Mammary epithelial cell (primary cell): ENCODE measurements at regions of chr16 and their contacts with region 1.

Region 1: DNA sequence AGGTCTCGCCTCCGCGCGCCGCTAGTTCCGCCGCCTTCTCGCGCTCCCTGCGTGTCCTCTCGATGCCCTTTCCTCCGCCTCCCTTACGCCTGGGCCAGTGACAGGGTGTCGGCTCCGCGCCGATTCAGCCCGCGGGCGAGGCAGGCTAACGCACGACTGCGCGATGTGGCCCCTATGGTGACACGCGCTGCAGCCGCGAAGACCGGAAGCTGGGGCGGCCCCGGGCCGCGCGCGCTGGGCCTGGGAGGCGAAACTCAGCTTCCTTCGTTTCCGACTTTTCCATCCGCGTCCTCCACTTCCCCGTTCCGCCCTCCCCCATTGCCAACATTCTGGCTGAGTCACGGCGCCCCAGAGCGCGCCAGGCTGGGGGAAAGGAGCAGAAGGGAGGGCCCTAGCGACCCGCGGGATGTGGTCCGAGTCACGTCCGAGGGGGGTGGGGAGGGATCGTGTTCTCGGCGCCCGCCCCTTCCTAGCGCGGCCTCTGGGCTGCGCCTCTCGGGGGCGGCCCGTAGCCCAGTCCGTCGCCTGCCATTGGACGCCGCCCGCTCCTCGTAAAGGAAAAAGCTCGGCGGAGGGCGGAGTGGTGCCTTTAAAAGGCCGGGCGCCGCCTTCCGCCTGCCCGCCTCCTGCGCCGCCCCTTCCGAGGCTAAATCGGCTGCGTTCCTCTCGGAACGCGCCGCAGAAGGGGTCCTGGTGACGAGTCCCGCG is at the start of gene ALDOA:
- DNase-seq: peak; percentile 100
- H3K4me3 ChIP-seq: peak within 1 kb of the TSS; percentile 97 to 100 (median 100)
- H3K27ac ChIP-seq: peak within 1 kb of the TSS; percentile 81
- H3K4me1 ChIP-seq: peaks cover 41% of the 10 kb centered on the region
- H3K27me3 ChIP-seq: no peaks in the 10 kb centered on the region
- CTCF ChIP-seq: no peak
- total RNA-seq, gene ALDOA: 758 to 2,329 TPM

Region 2: DNA sequence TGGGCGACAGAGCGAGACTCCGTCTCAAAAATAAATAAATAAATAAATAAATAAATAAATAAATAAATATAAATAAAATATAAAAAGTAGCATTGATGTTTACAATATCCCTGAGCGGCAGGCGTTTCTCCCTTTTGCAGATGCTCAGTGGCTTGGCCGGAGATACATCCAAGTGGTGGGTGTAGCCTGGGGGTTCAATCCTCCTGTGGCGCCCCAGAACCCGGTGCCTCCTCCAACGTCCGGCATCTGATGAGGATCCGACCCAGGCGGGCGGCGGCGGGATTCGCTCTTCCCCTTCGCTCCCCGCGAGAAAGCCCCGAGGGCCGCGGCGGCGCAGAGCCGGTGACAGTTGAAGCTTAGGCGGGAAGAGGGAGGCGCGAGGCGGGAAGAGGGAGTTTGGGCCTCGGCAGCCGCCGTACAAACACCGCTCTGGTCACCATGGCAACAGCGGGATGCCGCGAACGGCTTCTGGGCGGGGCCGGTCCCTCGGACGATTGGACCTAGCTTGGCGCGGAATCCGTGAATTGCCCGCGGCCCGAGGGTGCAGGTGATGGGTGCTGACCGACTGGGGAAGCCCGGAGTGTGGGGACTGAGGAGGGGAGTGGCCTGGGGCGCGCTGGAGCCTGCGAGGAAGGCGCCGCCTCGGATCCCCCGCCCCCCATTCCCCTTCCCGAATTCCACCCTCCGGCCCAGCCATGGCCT is 12.5 kb before region 1 on chr16:
- CTCF ChIA-PET with region 1: interaction called, 8 read pairs
- dilution Hi-C with region 1: no loop called
- in situ Hi-C with region 1: no loop called
- intact Hi-C with region 1: loop called (anchors 1 kb)
- DNase-seq: peak; percentile 90
- H3K4me3 ChIP-seq: peak overlapping the region; percentile 77 to 90 (median 89)
- H3K27ac ChIP-seq: peak overlapping the region; percentile 78
- H3K4me1 ChIP-seq: peaks cover 22% of the 10 kb centered on the region
- H3K27me3 ChIP-seq: no peaks in the 10 kb centered on the region
- CTCF ChIP-seq: no peak

Region 3: GRCh38 chr16:30075507-30076275 is 10.4 kb after region 1 on chr16 and contains the start of gene PPP4C:
- CTCF ChIA-PET with region 1: no interaction called
- dilution Hi-C with region 1: no loop called
- in situ Hi-C with region 1: no loop called
- intact Hi-C with region 1: loop called (anchors 1 kb)
- DNase-seq: peak; percentile 85
- H3K4me3 ChIP-seq: peak within 1 kb of the TSS; percentile 78 to 99 (median 89)
- H3K27ac ChIP-seq: peak within 1 kb of the TSS; percentile 80
- H3K4me1 ChIP-seq: peaks cover 14% of the 10 kb centered on the region
- H3K27me3 ChIP-seq: no peaks in the 10 kb centered on the region
- CTCF ChIP-seq: no peak
- total RNA-seq, gene PPP4C: 125 to 221 TPM

Region 4: GRCh38 chr16:30124985-30125379 is 59.7 kb after region 1 on chr16:
- CTCF ChIA-PET with region 1: no interaction called
- dilution Hi-C with region 1: no loop called
- in situ Hi-C with region 1: no loop called
- intact Hi-C with region 1: loop called (anchors 2 kb)
- DNase-seq: no peak
- H3K4me3 ChIP-seq: no peak overlapping the region
- H3K27ac ChIP-seq: no peak overlapping the region
- H3K4me1 ChIP-seq: peaks cover 8% of the 10 kb centered on the region
- H3K27me3 ChIP-seq: no peaks in the 10 kb centered on the region
- CTCF ChIP-seq: no peak

Region 5: DNA sequence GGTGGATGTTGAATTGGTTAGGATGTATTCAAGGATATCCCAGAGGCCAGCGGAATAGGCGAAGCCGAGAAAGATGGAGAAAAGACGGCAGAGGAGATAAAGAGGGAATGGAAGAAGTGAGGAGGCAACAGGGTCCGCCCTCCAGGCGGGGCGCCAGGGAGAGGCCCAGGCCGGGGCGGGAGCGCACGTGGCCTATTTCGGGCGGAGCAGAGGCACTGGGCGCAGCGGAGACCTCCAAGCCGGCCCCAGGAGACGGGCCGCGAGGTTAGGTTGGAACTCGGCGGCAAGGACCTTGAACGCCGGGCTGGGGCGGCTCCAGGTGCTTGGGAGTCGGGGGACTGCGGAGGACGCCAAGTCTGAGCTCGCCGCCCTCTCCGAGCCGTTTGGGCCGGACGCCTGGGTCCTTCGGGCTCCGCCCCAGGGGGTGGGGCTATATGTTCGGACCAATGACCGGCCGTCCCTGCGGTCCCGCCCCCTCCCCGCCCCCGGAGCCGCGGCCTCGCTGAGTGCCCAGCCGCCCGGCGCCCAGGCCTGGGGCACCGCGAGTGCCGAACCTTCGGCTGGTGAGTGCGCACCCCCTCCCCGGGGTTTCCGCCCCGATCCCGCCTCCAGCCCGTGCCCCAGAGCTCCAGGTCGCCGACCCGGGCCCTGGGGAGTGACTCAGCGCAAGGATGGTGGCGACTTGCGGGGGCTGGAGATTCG is 342.0 kb after region 1 on chr16 and contains the start of gene ZNF771:
- CTCF ChIA-PET with region 1: no interaction called
- dilution Hi-C with region 1: no loop called
- in situ Hi-C with region 1: no loop called
- intact Hi-C with region 1: loop called (anchors 2 kb)
- DNase-seq: peak; percentile 83
- H3K4me3 ChIP-seq: peak within 1 kb of the TSS; percentile 48 to 82 (median 82)
- H3K27ac ChIP-seq: peak within 1 kb of the TSS; percentile 64
- H3K4me1 ChIP-seq: peaks cover 12% of the 10 kb centered on the region
- H3K27me3 ChIP-seq: no peaks in the 10 kb centered on the region
- CTCF ChIP-seq: peak in 1 of 2 donors; percentile 10
- total RNA-seq, gene ZNF771: 6.3 to 6.5 TPM

Region 6: DNA sequence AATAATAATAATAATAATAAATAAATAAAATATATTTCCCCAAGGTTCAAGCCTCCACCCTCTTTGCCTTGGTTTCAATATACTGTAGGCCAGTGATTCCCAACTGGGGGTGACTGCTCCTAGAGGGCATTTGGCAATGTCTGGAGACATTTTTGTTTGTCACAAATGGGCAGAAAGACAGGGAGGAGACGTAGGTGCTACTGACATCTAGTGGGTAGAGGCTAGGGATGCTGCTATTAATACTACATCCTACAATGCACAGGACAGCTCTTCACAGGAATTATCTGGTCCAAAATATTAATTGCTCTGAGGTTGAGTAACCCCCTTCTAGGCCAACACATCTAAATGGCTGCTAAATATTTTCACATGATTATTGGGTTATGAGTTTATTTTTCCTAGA is 572.6 kb after region 1 on chr16:
- CTCF ChIA-PET with region 1: no interaction called
- dilution Hi-C with region 1: no loop called
- in situ Hi-C with region 1: no loop called
- intact Hi-C with region 1: loop called (anchors 10 kb)
- DNase-seq: peak; percentile 54
- H3K4me3 ChIP-seq: no peak overlapping the region
- H3K27ac ChIP-seq: no peak overlapping the region
- H3K4me1 ChIP-seq: no peaks in the 10 kb centered on the region
- H3K27me3 ChIP-seq: no peaks in the 10 kb centered on the region
- CTCF ChIP-seq: peak; percentile 55 to 74